ENCODE measurements at regions of chr12 and their contacts with region 1.

Region 1: GRCh38 chr12:118035246-118036041 is 18.9 kb downstream of the RFC5 start:
- DNase-seq: no peak
- ATAC-seq: peak in 2 of 4 donors; percentile 5 to 10
- H3K4me3 ChIP-seq: no peak overlapping the region
- H3K27ac ChIP-seq: no peak overlapping the region
- H3K4me1 ChIP-seq: peaks cover 0 to 18% (median 3%) of the 10 kb centered on the region in 4 donors
- H3K27me3 ChIP-seq: no peaks in the 10 kb centered on the region
- CTCF ChIP-seq: no peak
- POLR2A ChIP-seq: no peak

Region 2: DNA sequence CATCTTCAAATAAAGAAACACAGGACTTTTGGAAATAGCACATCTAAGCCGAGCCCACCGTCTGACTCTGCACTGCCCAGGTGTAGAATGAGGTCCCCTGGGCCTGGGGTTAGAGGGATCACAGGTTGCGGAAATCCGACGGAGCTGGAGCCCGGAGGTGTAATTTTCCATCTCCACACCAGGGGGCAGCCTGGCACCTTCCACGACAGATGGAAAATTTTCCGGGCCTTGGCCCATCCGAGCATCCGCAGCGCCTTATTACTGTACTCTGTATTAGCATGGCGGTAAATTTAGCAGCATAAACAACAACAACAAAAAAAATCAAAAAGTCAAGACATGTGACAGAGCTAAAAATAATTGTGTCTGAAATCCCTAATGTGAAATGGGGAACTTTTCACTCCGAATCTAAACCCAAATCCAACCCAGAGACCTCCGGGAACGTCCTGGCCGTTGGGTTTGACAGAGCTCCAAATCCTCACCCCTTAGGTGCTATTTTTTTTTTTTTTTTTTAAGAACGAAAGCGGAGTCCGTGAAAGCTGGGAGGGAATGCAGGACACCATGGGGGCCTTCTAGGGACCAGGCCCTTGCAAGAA is 160.5 kb before region 1 on chr12:
- intact Hi-C with region 1: loop called in 1 of 2 experiments (anchors 10 kb)
- DNase-seq: peak; percentile 67 to 71 (median 67)
- ATAC-seq: peak; percentile 91 to 98 (median 96)
- H3K4me3 ChIP-seq: no peak overlapping the region
- H3K27ac ChIP-seq: no peak overlapping the region
- H3K4me1 ChIP-seq: no peaks in the 10 kb centered on the region
- H3K27me3 ChIP-seq: no peaks in the 10 kb centered on the region
- CTCF ChIP-seq: peak; percentile 84 to 92 (median 88)
- POLR2A ChIP-seq: no peak

Region 3: GRCh38 chr12:118376089-118377020 is 340.9 kb after region 1 on chr12 and contains the start of gene SUDS3:
- intact Hi-C with region 1: no loop called
- DNase-seq: peak; percentile 92 to 93 (median 93)
- ATAC-seq: peak; percentile 55 to 64 (median 58)
- H3K4me3 ChIP-seq: peak within 1 kb of the TSS; percentile 93 to 100 (median 98)
- H3K27ac ChIP-seq: peak within 1 kb of the TSS; percentile 94 to 98 (median 95)
- H3K4me1 ChIP-seq: peaks cover 0 to 15% (median 3%) of the 10 kb centered on the region in 4 donors
- H3K27me3 ChIP-seq: no peaks in the 10 kb centered on the region
- CTCF ChIP-seq: peak; percentile 92 to 99 (median 94)
- POLR2A ChIP-seq: peak; percentile 40
- total RNA-seq, gene SUDS3: 9.7 to 15.9 (median 13.6) TPM

Measured in right lobe of liver (tissue), 6 donors.